ENCODE measurements at regions of chr3 and their contacts with region 1.

Region 1: GRCh38 chr3:40317061-40317855 is 7.8 kb downstream of the EIF1B start:
- ATAC-seq: peak; percentile 59 to 86 (median 78)
- H3K4me3 ChIP-seq: no peak overlapping the region
- H3K27ac ChIP-seq: no peak overlapping the region
- H3K4me1 ChIP-seq: peaks cover 0 to 5% of the 10 kb centered on the region in 2 donors

Region 2: DNA sequence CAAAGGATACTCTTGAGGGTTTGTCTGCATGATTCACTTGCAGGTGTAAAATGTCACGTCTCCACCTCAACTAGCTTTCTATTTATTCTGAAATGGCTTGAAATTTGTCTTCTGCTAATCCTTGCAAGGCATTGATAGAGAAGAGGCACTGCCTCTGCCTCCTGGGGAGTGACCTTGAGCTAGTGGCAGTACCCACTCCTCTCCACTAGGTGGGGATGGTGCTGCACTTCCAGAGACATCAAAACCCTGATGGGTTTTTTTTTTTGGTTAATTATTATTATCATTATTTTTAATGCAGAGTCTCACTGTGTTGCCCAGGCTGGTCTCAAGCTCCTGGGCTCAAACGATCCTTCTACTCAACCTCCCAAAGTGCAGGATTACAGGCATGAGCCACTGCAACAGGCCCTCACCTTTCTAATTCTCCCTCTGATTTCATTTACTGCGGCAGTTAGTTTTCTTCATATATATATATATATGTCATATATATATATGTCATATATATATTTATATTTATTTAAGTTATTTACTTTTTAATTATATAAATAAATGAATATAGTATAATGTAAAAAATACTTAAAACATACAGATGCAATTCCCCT is 125.3 kb before region 1 on chr3:
- in situ Hi-C with region 1: loop called (anchors 5 to 25 kb)
- ATAC-seq: peak; percentile 43 to 81 (median 55)
- H3K4me3 ChIP-seq: no peak overlapping the region
- H3K27ac ChIP-seq: no peak overlapping the region
- H3K4me1 ChIP-seq: peaks cover under 1 to 2% of the 10 kb centered on the region in 2 donors

Region 3: DNA sequence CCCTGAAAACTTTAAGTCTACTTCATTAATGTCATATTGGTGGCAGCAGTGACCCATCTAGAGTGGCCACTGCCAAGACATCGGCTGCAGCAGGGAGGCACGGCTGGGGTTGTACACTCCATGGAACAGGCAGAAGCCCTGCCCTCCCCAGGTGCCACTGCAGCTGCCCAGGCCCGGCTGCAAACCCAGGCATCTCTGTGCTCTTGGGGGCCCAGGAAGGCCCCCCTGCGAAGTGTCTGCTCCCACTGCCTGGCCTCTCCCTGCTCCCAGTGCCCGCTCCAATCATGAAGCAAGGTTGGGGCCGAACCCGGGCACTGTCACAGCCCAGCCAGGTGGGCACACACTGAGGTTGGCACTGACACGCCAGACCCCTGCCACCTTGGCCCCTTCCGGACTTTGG is 127.8 kb after region 1 on chr3:
- in situ Hi-C with region 1: loop called in 1 of 9 experiments (anchors 10 kb)
- ATAC-seq: no peak
- H3K4me3 ChIP-seq: no peak overlapping the region
- H3K27ac ChIP-seq: no peak overlapping the region
- H3K4me1 ChIP-seq: no peaks in the 10 kb centered on the region